Calu3 (cell line): ENCODE measurements at regions of chr15 and their contacts with region 1.

Region 1: DNA sequence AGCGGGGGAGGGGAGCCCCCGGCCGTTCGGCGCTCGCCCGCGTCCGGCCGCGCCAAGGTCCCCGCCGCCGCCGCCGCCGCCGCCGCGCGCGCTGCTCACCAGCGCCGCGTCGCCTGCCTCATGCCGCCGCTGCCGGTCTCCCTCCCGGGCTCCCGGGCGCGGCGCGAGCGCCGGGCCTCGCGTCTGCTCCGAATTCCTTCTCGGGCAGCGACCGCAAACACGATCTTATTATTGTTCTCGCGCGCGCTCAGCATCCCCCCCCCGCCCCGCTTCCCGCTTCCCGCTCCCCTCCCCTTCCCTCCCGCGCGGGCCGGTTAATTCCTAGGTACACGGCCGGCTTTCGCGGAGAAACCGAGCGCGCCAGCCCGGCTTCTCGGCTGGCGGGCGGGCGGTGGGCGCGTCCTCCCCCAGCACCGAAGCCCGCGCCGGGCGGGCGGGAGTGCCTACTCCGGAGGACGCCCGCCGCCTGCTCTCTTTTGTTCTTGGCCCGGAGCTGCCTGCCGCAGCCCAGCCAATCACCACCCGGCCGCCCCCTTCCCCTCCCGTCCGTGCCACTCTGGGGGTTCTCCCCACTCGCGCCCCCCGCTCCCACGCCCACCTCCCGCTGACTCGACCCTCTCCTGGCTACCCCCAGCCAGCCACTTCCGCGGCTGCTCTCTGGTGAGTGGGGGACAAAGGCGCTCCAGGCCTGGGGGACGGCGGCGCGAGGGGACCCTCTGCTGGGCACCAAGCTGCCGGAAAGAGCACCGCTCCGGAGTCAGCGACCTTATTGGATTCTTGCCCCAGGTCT is at the start of gene HDGFL3:
- DNase-seq: peak; percentile 62
- H3K4me3 Mint-ChIP-seq: no peak within 1 kb of the TSS
- H3K27ac Mint-ChIP-seq: peak within 1 kb of the TSS; percentile 90
- H3K4me1 Mint-ChIP-seq: peaks cover 29% of the 10 kb centered on the region
- H3K27me3 Mint-ChIP-seq: no peaks in the 10 kb centered on the region
- CTCF ChIP-seq: no peak
- total RNA-seq, gene HDGFL3: 62.9 and 69.4 TPM in 2 replicates

Region 2: DNA sequence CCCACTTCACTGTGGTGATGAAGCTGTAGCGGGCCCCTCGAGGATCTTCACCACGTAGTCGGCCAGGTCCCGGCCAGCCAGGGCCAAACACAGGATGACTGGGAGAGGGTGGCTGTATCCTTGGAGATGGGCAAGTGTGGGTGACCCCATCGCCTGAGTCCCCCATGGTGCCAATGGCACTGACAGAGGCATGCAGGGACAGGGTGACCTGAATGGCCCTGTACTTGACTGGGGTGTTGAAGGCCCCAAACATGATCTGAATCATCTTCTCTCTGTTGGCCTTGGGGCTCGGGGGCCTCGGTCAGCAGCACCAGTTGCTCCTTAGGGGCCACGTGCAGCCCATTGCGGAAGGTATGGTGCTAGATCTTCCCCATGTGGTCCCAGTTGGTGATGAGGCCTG is 481.0 kb before region 1 on chr15:
- CTCF ChIA-PET with region 1: interaction called, 18 read pairs
- intact Hi-C with region 1: no loop called
- DNase-seq: no peak
- H3K4me3 Mint-ChIP-seq: no peak overlapping the region
- H3K27ac Mint-ChIP-seq: no peak overlapping the region
- H3K4me1 Mint-ChIP-seq: no peaks in the 10 kb centered on the region
- H3K27me3 Mint-ChIP-seq: no peaks in the 10 kb centered on the region
- CTCF ChIP-seq: no peak

Region 3: DNA sequence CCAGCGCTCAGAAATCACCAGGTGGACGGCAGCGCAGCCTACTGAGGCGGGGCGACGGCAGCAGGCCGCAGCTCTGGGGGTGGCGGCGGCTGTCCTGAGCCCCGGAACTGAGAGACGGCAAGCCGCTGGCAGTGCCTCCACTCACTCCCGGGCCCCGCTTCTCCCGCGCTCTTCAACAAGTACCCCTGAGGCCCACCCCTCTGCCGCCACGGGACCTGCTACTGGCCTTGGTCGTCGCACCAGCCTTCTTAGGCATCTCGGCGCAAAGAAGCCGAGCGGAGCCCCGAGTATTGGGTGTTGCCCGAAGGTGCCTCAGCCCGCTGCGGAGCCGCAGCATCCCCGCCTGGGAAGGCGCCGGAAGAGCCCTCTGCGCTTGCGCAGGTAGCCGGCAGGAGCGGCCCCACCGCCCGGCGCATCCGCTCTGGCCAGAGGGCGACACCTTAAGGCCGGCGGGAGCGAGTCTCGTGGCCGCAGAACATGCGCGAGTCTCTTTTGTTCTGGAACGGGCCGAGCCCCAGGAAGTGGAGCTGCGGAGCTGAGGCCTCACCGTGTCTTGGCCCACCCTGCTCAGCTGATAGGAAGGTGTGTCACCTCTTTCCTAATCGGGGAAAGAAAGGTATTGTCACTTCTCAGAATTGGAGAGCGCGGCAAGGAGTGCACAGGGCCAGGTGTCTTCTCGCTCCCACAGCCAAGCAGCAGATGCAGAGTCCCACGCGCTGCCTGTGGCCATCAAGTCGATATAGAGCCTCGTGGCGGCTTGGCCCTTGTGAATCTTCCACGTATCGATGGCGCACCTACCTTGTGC is 196.3 kb before region 1 on chr15 and contains the start of gene C15orf40:
- CTCF ChIA-PET with region 1: no interaction called
- intact Hi-C with region 1: loop called (anchors 5 kb)
- DNase-seq: peak; percentile 95
- H3K4me3 Mint-ChIP-seq: peak within 1 kb of the TSS; percentile 95
- H3K27ac Mint-ChIP-seq: peak within 1 kb of the TSS; percentile 97
- H3K4me1 Mint-ChIP-seq: peaks cover 36% of the 10 kb centered on the region
- H3K27me3 Mint-ChIP-seq: no peaks in the 10 kb centered on the region
- CTCF ChIP-seq: peak; percentile 44
- total RNA-seq, gene C15orf40: 34.0 and 40.7 TPM in 2 replicates

Region 4: GRCh38 chr15:83066734-83067637 is 140.8 kb before region 1 on chr15 and contains the start of gene BTBD1:
- CTCF ChIA-PET with region 1: interaction called, 3 read pairs
- intact Hi-C with region 1: loop called (anchors 5 kb)
- DNase-seq: peak; percentile 98
- H3K4me3 Mint-ChIP-seq: peak within 1 kb of the TSS; percentile 66
- H3K27ac Mint-ChIP-seq: peak within 1 kb of the TSS; percentile 71
- H3K4me1 Mint-ChIP-seq: no peaks in the 10 kb centered on the region
- H3K27me3 Mint-ChIP-seq: no peaks in the 10 kb centered on the region
- CTCF ChIP-seq: no peak
- total RNA-seq, gene BTBD1: 73.2 and 77.3 TPM in 2 replicates

Region 5: DNA sequence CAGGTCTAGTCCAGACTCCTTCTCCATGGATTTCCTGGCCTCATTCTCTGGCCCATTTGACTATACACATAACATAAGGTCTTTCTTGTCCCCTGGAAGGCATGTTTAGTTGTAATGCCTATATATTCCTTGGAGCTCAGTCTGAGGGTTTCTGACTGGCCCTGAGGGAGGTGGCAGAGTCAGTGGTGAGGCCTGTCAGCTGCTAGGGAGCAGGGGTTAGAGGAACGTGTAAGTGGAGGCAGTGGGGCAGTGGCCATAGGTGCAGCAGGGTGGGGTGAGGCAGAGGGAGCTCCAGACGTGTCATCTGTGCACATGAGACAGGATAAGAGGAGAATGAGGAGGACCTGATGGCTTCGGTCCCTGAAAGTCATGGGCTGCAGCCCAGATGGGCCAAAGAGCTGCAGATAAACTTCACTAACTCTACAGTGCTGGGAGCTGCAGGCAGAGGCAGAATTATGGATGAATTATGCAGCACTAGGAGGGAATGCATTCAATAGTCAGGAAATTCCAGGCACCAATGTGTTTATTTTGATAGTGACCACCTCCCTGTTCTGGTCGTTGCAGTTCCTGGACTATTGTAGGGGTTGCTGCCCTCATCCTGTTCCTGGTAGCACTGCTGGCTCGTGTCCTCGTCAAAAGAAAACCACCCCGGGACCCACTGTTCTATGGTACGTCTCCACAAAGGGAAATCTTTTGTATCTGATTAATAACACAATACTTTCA is 95.4 kb before region 1 on chr15:
- CTCF ChIA-PET with region 1: no interaction called
- intact Hi-C with region 1: no loop called
- DNase-seq: no peak
- H3K4me3 Mint-ChIP-seq: no peak overlapping the region
- H3K27ac Mint-ChIP-seq: no peak overlapping the region
- H3K4me1 Mint-ChIP-seq: peaks cover 11% of the 10 kb centered on the region
- H3K27me3 Mint-ChIP-seq: peaks cover 34% of the 10 kb centered on the region
- CTCF ChIP-seq: no peak

Region 6: GRCh38 chr15:83164111-83164770 is 43.6 kb before region 1 on chr15:
- CTCF ChIA-PET with region 1: no interaction called
- intact Hi-C with region 1: no loop called
- DNase-seq: no peak
- H3K4me3 Mint-ChIP-seq: no peak overlapping the region
- H3K27ac Mint-ChIP-seq: no peak overlapping the region
- H3K4me1 Mint-ChIP-seq: peaks cover 19% of the 10 kb centered on the region
- H3K27me3 Mint-ChIP-seq: no peaks in the 10 kb centered on the region
- CTCF ChIP-seq: no peak